ENCODE measurements at regions of chr14 and their contacts with region 1.

Region 1: DNA sequence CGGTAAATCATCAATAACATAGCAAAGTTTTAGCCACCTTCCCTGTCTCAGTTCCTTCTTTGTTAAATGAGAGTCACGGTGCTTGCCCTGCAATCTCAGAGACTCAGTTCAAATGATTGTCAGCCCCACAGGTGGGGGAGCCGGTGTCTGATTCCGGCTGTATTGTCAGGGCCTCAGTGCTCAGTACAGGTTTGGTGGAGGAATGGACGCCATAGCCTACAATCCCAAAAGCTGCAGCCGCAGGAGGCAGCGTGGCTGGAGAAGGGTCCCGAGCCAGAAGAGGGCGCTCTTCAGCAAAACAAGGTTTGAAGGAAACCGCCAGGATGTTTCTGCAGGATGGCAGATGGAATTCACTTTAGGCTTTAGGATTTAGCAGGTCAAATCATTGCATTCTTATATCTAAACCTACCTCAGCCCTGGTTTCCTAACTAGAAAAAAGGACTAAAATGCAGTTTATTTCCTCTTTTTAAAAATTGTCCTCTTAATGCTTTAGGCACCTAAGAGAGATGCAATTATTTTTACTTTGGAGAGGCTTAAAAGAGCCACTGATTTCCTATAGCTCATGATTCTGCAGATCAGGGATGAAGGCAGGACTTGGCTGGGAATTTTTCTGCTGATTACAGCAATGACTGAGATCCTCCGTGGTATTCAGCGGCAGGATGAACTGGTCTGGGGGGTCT is 29.2 kb downstream of the FOS start:
- DNase-seq: peak; percentile 76 to 97 (median 89)
- ATAC-seq: peak; percentile 76
- H3K4me3 ChIP-seq: no peak overlapping the region
- H3K4me1 ChIP-seq: peaks cover 5% of the 10 kb centered on the region
- CTCF ChIP-seq: peak; percentile 79

Region 2: DNA sequence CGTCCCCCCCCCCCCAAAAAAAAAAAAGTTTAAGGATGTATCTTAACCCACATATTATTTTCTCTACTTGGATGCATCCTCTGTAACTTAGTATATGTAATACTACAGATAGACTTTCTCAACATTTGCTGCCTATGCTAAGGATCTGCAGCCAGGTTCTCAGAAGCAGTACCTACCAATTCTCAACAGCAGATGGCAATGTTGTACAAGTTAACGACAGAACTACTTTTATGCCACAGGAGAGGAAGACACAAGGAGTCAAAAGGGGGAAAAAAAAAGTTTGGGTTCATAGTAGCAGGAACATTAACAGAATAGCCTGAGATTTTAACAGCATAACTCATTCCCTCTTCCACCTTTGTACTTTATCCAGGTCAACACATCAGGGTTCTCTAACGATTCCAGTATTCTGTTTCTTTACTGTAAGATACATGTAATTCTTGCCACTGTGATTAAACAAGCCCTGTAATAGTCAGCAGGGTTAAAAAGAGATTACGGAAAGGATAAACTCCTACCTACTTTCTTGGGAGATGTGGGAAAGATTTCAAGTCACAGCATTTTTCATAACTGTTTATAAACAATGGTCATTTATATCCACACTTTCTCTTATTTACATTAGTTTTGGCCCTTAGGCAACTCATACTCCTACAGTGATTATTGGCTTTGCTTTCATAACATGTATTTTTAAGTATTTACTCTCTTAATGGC is 175.3 kb before region 1 on chr14:
- intact Hi-C with region 1: loop called (anchors 2 to 5 kb)
- DNase-seq: peak in 1 of 3 donors; percentile 90
- ATAC-seq: peak; percentile 84
- H3K4me3 ChIP-seq: no peak overlapping the region
- H3K4me1 ChIP-seq: peaks cover 19% of the 10 kb centered on the region
- CTCF ChIP-seq: peak; percentile 46

Region 3: DNA sequence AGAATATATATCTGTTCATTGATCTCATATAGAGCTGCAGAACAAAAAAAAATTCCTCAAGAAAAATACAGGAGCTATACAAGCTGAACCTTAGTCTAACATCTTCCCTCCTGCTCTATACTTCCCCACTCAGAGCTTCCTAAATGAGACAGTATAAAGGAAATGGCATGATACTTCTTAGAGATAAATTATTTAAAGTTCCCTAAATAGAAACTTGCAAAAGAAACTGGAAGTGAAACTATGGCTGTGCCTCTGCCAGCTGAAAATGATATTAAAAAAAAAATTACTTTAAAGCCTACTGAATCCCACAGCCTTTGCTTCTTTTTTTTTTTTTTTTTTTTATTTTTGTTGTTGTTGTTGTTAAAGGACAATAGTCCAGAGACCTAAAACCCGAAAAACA is 169.3 kb before region 1 on chr14:
- intact Hi-C with region 1: loop called (anchors 2 to 5 kb)
- DNase-seq: no peak
- ATAC-seq: peak; percentile 28
- H3K4me3 ChIP-seq: no peak overlapping the region
- H3K4me1 ChIP-seq: peaks cover 22% of the 10 kb centered on the region
- CTCF ChIP-seq: no peak

Region 4: DNA sequence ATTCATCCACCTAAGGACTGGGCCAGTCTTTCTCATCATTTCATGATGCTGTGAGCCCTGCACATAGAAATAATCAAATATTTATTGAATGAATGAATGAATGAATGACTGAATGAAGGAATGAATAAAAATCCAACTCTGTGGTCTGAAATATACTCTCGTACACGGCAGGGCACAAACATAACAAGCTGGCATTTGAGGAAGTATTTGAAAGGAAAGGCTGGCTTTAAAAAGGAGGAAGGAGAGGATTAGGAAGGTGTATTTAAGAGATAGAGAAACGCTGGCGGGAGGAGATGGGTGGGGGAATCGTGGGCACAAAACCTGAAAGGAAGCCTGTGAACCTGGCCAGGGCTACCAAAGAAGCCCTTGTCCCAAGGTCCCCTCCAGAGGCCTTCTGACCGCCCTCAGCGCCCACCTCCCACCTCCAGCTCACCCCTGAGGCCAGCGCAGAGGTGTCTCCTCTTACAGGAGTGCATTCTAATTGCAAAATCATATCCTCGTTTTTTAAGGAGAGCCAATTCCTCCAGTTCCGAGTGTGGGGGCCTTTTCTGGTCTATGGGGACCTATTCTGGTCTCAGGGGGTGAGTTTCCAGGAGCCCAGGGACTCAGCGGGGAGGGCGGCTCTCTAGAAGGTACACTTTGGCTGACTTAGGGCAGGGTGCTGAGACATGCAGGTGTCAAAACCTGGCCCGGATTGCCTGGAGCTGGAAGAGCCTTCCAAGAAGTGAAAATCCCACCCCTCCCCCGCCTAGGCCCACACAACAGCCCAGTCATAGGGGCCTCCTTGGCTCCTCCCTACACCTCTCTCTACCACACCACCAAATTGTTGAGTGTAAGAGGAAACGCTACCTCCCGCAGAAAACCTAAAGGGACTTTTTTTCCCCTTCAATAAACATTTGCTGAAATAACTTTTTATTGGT is 111.3 kb after region 1 on chr14:
- intact Hi-C with region 1: loop called in 1 of 2 experiments (anchors 10 kb)
- DNase-seq: peak; percentile 76 to 88 (median 81)
- ATAC-seq: peak; percentile 94
- H3K4me3 ChIP-seq: no peak overlapping the region
- H3K4me1 ChIP-seq: peaks cover 20% of the 10 kb centered on the region
- CTCF ChIP-seq: no peak

Region 5: GRCh38 chr14:75487155-75487671 is 179.4 kb after region 1 on chr14:
- intact Hi-C with region 1: loop called (anchors 2 to 5 kb)
- DNase-seq: no peak
- ATAC-seq: peak; percentile 51
- H3K4me3 ChIP-seq: no peak overlapping the region
- H3K4me1 ChIP-seq: no peaks in the 10 kb centered on the region
- CTCF ChIP-seq: no peak